Heart right ventricle (tissue), 16 donors: ENCODE measurements at regions of chr6 and their contacts with region 1.

Region 1: GRCh38 chr6:105363100-105363754 is 39.7 kb downstream of the PREP start:
- DNase-seq: no peak
- ATAC-seq: no peak
- H3K4me3 ChIP-seq: no peak overlapping the region
- H3K27ac ChIP-seq: no peak overlapping the region
- H3K4me1 ChIP-seq: peaks cover 0 to 15% (median 0%) of the 10 kb centered on the region in 9 donors
- H3K27me3 ChIP-seq: no peaks in the 10 kb centered on the region
- CTCF ChIP-seq: peak in 6 of 9 donors; percentile 26 to 52 (median 44)

Region 2: DNA sequence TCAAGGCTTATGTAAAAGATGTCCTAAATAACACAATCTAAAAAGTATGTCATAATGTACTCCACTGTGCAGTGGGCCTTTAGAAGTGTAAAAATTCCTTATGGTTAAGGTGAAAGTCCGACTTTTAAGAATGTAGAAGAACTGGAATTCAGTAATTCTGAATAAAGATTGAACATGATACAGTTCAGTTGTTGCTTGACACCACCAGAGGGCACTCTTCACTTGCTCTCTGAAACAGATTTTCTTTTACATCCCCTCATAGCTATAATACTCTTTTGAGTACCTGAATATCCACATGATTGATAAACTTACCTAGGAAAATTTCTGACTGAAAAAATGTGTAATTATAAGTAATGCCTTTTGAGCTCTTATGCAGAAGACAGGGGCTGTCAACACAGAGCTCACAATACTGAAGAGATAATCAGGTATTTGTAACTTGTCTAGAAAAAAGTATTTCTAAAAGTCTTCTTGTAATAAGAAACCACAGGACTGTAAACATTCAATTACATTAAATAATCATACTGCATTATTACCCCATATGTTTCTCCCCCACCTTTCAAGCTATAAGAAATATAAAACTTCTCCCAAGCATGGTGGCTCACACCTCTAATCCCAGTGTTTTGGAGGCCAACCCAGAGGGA is 275.5 kb before region 1 on chr6:
- intact Hi-C with region 1: loop called in 4 of 10 experiments (anchors 5 kb)
- DNase-seq: peak in 1 of 2 donors; percentile 28
- ATAC-seq: peak in 4 of 8 donors; percentile 43 to 62 (median 58)
- H3K4me3 ChIP-seq: no peak overlapping the region
- H3K27ac ChIP-seq: no peak overlapping the region
- H3K4me1 ChIP-seq: peaks cover 0 to 8% (median 0%) of the 10 kb centered on the region in 9 donors
- H3K27me3 ChIP-seq: no peaks in the 10 kb centered on the region
- CTCF ChIP-seq: peak; percentile 65 to 92 (median 84)

Region 3: DNA sequence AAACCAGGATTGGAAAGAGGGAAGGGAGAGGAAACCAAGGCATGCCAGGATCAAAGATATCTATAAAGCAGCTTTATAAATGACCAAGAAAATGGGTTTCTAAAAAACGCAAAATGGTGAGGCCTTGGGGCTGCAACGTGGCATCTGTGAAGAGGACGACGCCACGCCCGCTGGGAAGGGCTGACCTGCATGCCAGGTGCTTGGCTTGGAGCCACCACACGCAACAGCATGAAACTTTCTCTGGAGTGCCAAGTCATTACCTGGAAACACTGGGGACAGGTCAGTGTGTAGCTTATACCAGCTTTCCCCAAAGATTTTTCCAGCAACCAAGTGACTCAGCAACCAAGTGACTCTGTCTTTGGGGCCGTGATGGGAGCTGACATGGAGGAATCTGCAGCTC is 265.9 kb before region 1 on chr6:
- intact Hi-C with region 1: loop called in 1 of 10 experiments (anchors 5 kb)
- DNase-seq: no peak
- ATAC-seq: no peak
- H3K4me3 ChIP-seq: no peak overlapping the region
- H3K27ac ChIP-seq: no peak overlapping the region
- H3K4me1 ChIP-seq: no peaks in the 10 kb centered on the region
- H3K27me3 ChIP-seq: no peaks in the 10 kb centered on the region
- CTCF ChIP-seq: no peak

Region 4: DNA sequence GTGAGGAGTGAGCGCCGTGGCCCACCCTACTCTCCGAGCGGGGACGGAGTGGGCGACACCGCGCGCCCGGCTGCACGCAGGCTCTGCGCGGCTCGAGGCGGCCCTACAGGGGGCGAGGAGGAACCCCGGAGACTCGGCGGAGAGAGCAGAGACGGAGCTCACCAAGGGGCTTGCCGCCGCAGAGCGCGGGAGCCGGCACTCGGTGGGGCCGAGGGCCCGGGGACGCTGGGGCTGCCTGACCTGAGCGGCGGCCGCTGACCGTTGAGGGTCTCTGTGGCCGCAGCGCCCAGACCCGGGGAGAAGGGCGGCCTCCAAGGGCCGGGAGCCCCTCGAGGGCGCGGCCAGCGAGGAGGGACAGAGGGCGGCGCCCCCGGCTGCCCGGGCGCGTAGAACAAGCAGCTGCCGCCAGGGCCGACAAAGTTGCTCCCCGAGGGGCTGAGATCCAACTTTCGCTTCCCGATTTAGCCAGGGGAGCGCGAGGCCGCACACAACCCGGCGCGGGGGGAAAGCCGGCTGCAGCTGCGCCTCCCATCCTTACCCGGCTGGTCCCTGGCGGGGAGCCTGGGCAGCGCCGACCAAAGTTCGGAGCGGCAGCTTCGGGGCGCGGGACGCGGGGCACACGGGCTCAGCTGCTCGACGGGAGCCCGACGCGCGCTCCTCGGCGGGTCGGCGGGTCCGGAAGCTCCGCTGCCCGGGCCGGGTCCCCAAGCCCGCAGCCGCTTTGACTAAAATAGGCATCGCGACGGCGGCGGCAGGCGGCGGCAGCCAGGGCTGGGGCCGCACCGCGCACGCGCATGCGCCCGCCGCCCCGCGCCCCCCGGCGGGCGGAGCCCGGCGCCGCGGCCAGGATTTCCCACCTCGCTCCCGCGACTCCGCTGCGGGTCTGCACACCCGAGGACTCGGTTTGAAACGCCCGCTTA is 226.5 kb before region 1 on chr6:
- intact Hi-C with region 1: loop called in 4 of 10 experiments (anchors 5 to 10 kb)
- DNase-seq: peak; percentile 75 to 77
- ATAC-seq: peak; percentile 78 to 90 (median 85)
- H3K4me3 ChIP-seq: peak overlapping the region; percentile 69 to 95 (median 86)
- H3K27ac ChIP-seq: peak overlapping the region; percentile 81 to 93 (median 91)
- H3K4me1 ChIP-seq: peaks cover 0 to 15% (median 7%) of the 10 kb centered on the region in 9 donors
- H3K27me3 ChIP-seq: peaks cover 0 to 63% (median 0%) of the 10 kb centered on the region in 7 donors
- CTCF ChIP-seq: peak in 6 of 9 donors; percentile 9 to 46 (median 40)

Region 5: DNA sequence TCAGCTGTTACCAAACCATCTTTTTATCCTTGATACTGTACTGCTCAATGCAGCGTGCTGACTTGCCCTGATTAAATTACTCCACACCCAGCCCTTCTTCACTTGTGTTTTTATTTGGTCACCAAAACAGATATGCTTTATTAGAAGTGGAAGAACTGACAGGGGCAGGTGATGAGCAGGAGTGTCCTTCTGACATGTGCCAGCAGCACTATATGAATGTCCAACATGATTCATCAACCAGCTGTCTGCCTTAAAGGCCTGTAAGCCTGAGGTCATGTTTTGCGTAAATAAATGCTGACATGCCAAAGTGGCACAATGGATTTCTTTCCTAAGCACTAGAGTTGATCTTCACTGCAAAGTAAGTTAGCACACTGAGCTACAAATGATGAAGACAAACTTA is 198.8 kb before region 1 on chr6:
- intact Hi-C with region 1: loop called in 1 of 10 experiments (anchors 10 kb)
- DNase-seq: peak in 1 of 2 donors; percentile 7
- ATAC-seq: peak in 7 of 8 donors; percentile 66 to 97 (median 94)
- H3K4me3 ChIP-seq: no peak overlapping the region
- H3K27ac ChIP-seq: peak overlapping the region in 5 of 10 donors; percentile 10 to 63 (median 54)
- H3K4me1 ChIP-seq: peaks cover 0 to 21% (median 6%) of the 10 kb centered on the region in 9 donors
- H3K27me3 ChIP-seq: no peaks in the 10 kb centered on the region
- CTCF ChIP-seq: no peak

Region 6: DNA sequence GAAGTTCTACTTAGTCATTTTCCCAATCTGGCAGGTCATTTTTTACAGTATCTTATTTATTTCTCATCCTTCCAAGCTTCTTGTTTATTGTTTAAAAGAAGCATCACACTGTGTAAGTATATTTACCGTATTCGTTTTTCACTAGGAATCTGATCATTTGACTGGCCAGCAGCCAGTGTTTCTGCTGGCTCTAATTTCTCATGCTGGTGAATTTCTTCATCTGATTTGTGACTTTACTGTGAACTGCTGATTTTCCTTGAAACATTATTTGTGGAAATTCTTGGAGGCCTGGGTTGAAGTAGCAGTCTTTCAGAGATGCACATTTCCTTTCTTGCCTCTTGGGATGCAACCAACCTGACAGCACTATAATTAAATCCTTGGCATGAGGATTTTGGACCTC is 26.2 kb before region 1 on chr6:
- intact Hi-C with region 1: no loop called
- DNase-seq: no peak
- ATAC-seq: no peak
- H3K4me3 ChIP-seq: no peak overlapping the region
- H3K27ac ChIP-seq: no peak overlapping the region
- H3K4me1 ChIP-seq: peaks cover 0 to 5% (median 0%) of the 10 kb centered on the region in 9 donors
- H3K27me3 ChIP-seq: no peaks in the 10 kb centered on the region
- CTCF ChIP-seq: no peak

Region 7: GRCh38 chr6:105675715-105676397 is 312.6 kb after region 1 on chr6:
- intact Hi-C with region 1: no loop called
- DNase-seq: no peak
- ATAC-seq: no peak
- H3K4me3 ChIP-seq: no peak overlapping the region
- H3K27ac ChIP-seq: no peak overlapping the region
- H3K4me1 ChIP-seq: peaks cover 0 to 19% (median 5%) of the 10 kb centered on the region in 9 donors
- H3K27me3 ChIP-seq: no peaks in the 10 kb centered on the region
- CTCF ChIP-seq: no peak

Region 8: DNA sequence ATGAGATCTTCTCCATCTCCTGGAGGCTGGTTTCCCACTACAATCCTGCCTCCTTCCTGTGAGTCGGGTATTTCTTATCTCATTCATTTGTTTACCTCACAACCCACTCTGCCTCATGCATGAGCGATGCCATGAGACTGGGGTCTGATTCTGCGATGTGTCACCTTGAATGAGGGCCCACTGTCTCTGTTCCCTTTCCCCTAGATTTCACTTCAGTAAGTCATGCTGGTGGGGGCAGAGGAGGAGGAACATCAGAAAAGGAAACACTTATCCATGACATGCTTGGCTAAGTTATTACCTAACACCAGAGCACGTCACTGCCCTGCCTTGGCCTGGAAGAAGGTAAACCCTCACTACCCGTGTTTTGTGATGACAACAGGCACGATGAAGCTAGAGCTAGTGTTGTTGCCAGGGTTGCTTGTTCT is 385.5 kb after region 1 on chr6:
- intact Hi-C with region 1: no loop called
- DNase-seq: no peak
- ATAC-seq: peak in 2 of 8 donors; percentile 33 to 63
- H3K4me3 ChIP-seq: no peak overlapping the region
- H3K27ac ChIP-seq: no peak overlapping the region
- H3K4me1 ChIP-seq: peaks cover 0 to 9% (median 4%) of the 10 kb centered on the region in 9 donors
- H3K27me3 ChIP-seq: peaks cover 0 to 3% (median 0%) of the 10 kb centered on the region in 7 donors
- CTCF ChIP-seq: no peak